ENCODE measurements at regions of chr15 and their contacts with region 1.

Region 1: DNA sequence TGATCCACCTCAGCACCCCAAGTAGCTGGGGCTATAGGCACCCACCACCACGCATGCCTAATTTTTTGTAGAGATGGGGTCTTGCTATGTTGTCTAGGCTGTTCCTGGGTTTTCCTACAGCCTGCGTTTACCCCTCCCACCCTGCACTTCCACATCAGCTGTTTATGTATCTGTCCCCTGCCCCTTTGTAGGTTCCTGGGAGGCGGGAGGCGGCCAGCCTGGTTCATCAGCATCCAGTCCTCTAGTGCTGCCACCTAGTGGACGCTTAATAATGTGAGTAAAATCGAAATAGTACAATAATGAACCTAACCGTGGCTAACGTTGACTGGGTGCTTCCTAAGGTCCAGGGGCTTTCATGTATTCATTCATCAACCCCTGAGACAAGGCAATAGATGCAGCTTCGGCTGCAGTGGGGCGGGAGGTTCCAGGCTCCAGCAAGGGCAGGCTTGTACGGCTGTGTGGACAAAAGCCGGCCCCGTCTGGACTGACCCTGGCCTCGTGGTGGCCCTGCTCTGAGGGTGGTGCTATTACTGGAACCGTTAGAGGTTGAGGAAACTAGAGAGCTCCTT is 1.2 kb upstream of the LCTL start:
- DNase-seq: peak; percentile 82 to 88 (median 82)
- ATAC-seq: peak; percentile 91
- H3K4me3 ChIP-seq: no peak overlapping the region
- H3K27ac ChIP-seq: no peak overlapping the region; the same call in 1 of the 3 replicates
- H3K4me1 ChIP-seq: peaks cover 5 to 24% of the 10 kb centered on the region in 2 experiments; a peak in 3 of 5 replicates
- H3K27me3 ChIP-seq: no peaks in the 10 kb centered on the region
- CTCF ChIP-seq: peak; percentile 74 to 87 (median 74)
- EP300 ChIP-seq: no peak
- POLR2A ChIP-seq: no peak
- RAD21 ChIP-seq: peak in 1 of 2 experiments; percentile 49; a peak in 2 of 4 replicates

Region 2: DNA sequence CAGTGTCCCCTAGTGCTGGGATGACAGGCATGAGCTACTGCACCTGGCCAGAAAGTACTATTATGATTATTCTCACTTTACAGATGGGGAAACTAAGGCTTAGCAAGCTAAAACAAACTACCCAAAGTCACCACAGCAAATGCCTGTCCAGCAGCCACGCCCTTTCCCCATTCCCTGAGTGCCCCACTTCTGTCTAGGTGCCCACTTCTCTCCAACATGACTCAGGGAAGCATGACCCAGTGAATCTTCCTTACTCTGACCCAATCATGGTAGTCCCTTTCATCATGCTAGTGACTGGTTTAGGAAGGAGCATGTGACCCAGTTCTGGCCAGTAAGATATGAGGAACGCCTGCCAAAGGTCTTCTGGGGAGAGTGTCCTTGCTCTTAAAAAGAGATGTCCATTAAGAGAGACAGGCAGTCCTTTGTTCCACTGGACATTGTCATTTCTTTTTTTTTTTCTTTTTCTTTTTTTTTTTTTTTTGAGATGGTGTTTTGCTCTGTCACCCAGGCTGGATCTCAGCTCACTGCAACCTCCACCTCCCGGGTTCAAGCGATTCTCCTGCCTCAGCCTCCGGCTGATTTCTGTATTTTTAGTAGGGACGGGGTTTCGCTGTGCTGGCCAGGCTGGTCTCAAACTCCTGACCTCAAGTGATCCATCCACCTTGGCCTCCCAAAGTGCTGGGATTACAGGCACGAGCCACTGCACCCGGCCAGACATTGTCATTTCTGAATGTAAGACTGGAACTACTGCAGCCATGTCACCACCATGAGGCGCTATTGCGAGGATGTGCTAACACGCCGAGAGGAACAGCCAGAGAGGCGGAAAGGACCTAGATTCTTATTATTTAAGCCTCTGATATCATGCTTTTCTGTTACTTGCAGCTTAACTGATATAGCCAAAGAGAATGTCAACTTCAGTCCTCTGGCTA is 333.3 kb before region 1 on chr15:
- CTCF ChIA-PET with region 1: no interaction called
- POLR2A ChIA-PET with region 1: no interaction called
- in situ Hi-C with region 1: no loop called
- intact Hi-C with region 1: no loop called
- DNase-seq: peak; percentile 48 to 67 (median 63)
- ATAC-seq: peak; percentile 92
- H3K4me3 ChIP-seq: no peak overlapping the region
- H3K27ac ChIP-seq: no peak overlapping the region; the same call in 2 of the 3 replicates
- H3K4me1 ChIP-seq: peaks cover 0 to 9% of the 10 kb centered on the region in 2 experiments; a peak in 2 of 5 replicates
- H3K27me3 ChIP-seq: peaks cover 7 to 24% of the 10 kb centered on the region in 2 experiments; a peak in 4 of 5 replicates
- CTCF ChIP-seq: peak; percentile 64 to 75 (median 67)
- EP300 ChIP-seq: peak; percentile 32; the same call in 1 of the 2 replicates
- POLR2A ChIP-seq: no peak
- RAD21 ChIP-seq: peak in 1 of 2 experiments; percentile 51; a peak in 3 of 4 replicates

Region 3: GRCh38 chr15:66504563-66505429 is 62.3 kb before region 1 on chr15 and contains the starts of genes RPL4 and ZWILCH:
- CTCF ChIA-PET with region 1: no interaction called
- POLR2A ChIA-PET with region 1: interaction called, 8 read pairs
- in situ Hi-C with region 1: no loop called
- intact Hi-C with region 1: loop called (anchors 5 kb)
- DNase-seq: peak; percentile 81 to 88 (median 82)
- ATAC-seq: peak; percentile 84
- H3K4me3 ChIP-seq: peak within 1 kb of the TSS; percentile 71
- H3K27ac ChIP-seq: peak within 1 kb of the TSS; percentile 97
- H3K4me1 ChIP-seq: peaks cover 17 to 19% of the 10 kb centered on the region in 2 experiments
- H3K27me3 ChIP-seq: no peaks in the 10 kb centered on the region
- CTCF ChIP-seq: no peak
- EP300 ChIP-seq: no peak
- POLR2A ChIP-seq: peak; percentile 100
- RAD21 ChIP-seq: no peak
- polyA plus RNA-seq, gene RPL4: 3,604 to 3,827 TPM
- polyA plus RNA-seq, gene ZWILCH: 93.2 to 94.2 TPM